Activated CD8-positive, alpha-beta T cell treated with anti-CD3 and anti-CD28 coated beads, Interleukin-2, amount 10 ng/mL, durations not matched to agents 7 days and 5 days (primary cell): ENCODE measurements at regions of chr5 and their contacts with region 1.

Region 1: DNA sequence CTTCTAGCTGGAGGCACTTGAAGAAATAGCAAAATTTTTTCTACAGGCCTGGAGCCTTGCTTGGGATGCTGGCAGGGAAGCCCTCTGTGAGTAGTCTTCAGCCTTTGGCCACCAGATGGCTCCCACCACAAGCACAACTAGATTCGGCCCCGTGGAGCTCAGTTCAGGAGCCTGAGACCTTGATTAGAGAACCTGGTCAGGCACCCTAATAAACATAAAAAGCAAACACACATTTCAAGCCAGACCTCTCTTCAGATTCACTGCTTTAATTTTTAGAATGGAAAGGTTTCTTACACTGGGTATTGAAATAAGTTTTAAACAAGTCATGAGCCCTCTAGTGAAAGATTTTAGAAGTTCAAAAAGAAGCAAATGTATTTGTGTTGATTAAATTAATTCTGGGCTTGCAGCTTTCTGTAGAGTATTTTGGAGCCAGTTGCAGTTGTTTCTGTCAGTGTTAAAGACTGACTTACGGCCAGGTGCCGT is 41.4 kb downstream of the GLRX start:
- DNase-seq: peak; percentile 82
- ATAC-seq: peak; percentile 97
- H3K4me3 Mint-ChIP-seq: no peak overlapping the region
- H3K27ac Mint-ChIP-seq: peak overlapping the region; percentile 26
- H3K4me1 Mint-ChIP-seq: peaks cover 38% of the 10 kb centered on the region
- H3K27me3 Mint-ChIP-seq: no peaks in the 10 kb centered on the region

Region 2: GRCh38 chr5:95664204-95664786 is 116.8 kb before region 1 on chr5:
- CTCF ChIA-PET with region 1: interaction called, 37 read pairs
- POLR2A ChIA-PET with region 1: no interaction called
- DNase-seq: peak; percentile 59
- ATAC-seq: no peak
- H3K4me3 Mint-ChIP-seq: no peak overlapping the region
- H3K27ac Mint-ChIP-seq: no peak overlapping the region
- H3K4me1 Mint-ChIP-seq: no peaks in the 10 kb centered on the region
- H3K27me3 Mint-ChIP-seq: peaks cover 7% of the 10 kb centered on the region

Region 3: GRCh38 chr5:95760273-95761191 is 20.6 kb before region 1 on chr5:
- CTCF ChIA-PET with region 1: interaction called, 26 read pairs
- POLR2A ChIA-PET with region 1: no interaction called
- DNase-seq: peak; percentile 38
- ATAC-seq: peak; percentile 90
- H3K4me3 Mint-ChIP-seq: peak overlapping the region; percentile 71
- H3K27ac Mint-ChIP-seq: peak overlapping the region; percentile 92
- H3K4me1 Mint-ChIP-seq: peaks cover 35% of the 10 kb centered on the region
- H3K27me3 Mint-ChIP-seq: peaks cover under 1% of the 10 kb centered on the region

Region 4: DNA sequence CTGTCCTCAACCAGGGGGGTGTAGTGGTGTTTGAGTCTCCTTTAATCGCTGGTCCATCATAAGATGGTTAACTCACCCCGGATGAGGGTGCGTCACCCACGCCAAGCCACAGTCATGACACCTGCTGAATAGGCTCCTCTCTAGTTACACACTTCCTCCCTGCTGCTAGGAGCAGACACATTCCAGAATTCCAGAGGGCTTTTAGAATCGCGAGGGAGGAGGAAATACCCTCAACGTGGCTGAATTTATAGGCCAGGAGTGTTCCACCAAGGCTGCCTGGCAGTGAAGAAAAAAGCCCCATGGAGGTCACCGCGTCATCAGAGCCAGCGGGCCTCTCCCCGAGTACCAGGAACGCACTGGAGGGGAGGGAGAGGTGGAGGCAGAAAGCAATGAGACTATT is 36.3 kb after region 1 on chr5:
- CTCF ChIA-PET with region 1: interaction called, 130 read pairs
- POLR2A ChIA-PET with region 1: no interaction called
- DNase-seq: no peak
- ATAC-seq: no peak
- H3K4me3 Mint-ChIP-seq: peak overlapping the region; percentile 69
- H3K27ac Mint-ChIP-seq: peak overlapping the region; percentile 69
- H3K4me1 Mint-ChIP-seq: peaks cover 76% of the 10 kb centered on the region
- H3K27me3 Mint-ChIP-seq: no peaks in the 10 kb centered on the region

Region 5: GRCh38 chr5:95846554-95847260 is 65.6 kb after region 1 on chr5:
- CTCF ChIA-PET with region 1: interaction called, 536 read pairs
- POLR2A ChIA-PET with region 1: no interaction called
- DNase-seq: peak; percentile 77
- ATAC-seq: peak; percentile 57
- H3K4me3 Mint-ChIP-seq: no peak overlapping the region
- H3K27ac Mint-ChIP-seq: no peak overlapping the region
- H3K4me1 Mint-ChIP-seq: peaks cover 36% of the 10 kb centered on the region
- H3K27me3 Mint-ChIP-seq: peaks cover 21% of the 10 kb centered on the region

Region 6: GRCh38 chr5:95892780-95893354 is 111.7 kb after region 1 on chr5:
- CTCF ChIA-PET with region 1: no interaction called
- POLR2A ChIA-PET with region 1: no interaction called
- DNase-seq: peak; percentile 63
- ATAC-seq: peak; percentile 61
- H3K4me3 Mint-ChIP-seq: no peak overlapping the region
- H3K27ac Mint-ChIP-seq: no peak overlapping the region
- H3K4me1 Mint-ChIP-seq: peaks cover 6% of the 10 kb centered on the region
- H3K27me3 Mint-ChIP-seq: no peaks in the 10 kb centered on the region

Region 7: GRCh38 chr5:96336351-96336985 is 555.3 kb after region 1 on chr5:
- CTCF ChIA-PET with region 1: interaction called, 10 read pairs
- POLR2A ChIA-PET with region 1: no interaction called
- DNase-seq: peak; percentile 73
- ATAC-seq: peak; percentile 84
- H3K4me3 Mint-ChIP-seq: no peak overlapping the region
- H3K27ac Mint-ChIP-seq: no peak overlapping the region
- H3K4me1 Mint-ChIP-seq: no peaks in the 10 kb centered on the region
- H3K27me3 Mint-ChIP-seq: peaks cover 17% of the 10 kb centered on the region